Head of caudate nucleus (tissue), 42 donors: ENCODE measurements at regions of chr9 and their contacts with region 1.

Region 1: DNA sequence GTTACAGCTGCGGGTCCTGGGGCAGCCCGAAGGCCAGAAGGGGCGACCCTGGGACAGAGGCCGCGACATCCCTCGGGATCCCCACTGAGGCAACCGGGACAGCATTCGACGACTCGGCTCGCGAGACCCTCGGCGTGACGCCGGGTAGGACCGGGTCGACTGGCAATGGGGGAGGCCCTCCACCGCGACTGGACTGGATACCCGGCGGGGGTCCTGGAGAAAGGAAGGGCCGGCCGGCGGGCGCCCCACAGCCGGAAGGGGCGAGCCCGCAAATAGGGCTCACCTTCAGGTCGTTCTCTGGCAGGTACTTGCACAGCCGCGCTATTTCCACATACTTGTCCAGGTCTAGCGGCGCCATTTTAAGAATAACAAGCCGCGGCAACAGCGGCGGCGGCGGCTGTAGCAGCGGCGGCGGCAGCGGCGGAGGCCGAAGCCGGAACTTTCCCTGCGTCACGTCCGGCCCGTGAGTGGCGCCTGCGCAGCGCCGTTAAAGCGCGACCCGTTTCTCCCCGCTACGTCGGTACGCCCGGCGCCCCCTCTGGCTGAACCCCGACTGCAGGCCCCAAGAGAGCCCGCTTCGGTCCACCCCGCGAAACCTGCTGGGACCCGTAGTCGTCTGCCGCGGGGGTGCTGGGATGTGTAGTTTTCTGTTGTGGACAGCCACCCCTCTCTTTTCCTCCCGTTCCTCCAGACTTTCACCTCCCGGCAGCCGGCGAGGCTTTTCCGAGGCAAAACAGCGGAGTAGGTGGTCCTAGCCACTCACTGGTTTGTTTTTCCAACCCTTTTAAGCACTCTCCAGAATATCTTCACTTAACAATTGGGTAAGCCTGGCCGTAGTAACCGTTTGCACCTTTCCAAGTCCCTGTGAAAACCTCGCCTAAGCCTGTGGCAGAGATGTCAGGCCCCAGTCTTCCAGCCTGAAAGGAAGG is at the start of gene PPP6C:
- DNase-seq: peak; percentile 95 to 99 (median 99)

Region 2: GRCh38 chr9:124861342-124862229 is 328.0 kb before region 1 on chr9 and contains the starts of genes ARPC5L and RPL35:
- intact Hi-C with region 1: no loop called
- DNase-seq: peak; percentile 90 to 99 (median 97)

Region 3: DNA sequence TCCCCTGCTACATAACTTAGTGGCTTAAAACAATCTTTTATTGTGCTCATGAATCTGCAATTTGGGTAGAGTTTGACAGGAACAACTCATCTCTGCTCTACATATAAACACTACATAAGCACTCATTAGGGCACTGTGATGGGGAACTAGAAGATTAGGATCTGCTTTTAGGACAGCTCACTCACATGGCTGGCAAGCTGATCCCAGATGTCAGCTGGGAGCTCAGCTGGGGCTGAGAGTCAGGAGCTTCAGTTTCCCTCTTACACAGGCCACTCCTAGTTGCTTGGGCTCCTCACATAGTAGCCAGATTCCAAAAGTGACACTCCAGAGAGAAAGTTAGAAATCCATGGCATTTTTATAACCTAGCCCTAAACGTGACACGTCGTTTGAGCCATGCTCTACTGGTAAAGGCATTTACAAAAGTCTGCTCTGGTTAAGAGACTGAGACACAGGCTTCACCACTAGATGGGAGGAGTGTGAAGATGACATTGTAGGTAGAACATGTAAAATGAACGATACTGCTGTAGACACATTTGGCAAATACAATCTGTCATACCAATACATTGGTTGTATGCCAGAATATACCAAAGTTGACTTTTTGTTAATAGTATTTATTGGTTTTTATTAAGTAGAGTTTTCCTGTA is 69.9 kb before region 1 on chr9:
- intact Hi-C with region 1: no loop called
- DNase-seq: peak in 1 of 42 donors; percentile 3

Region 4: DNA sequence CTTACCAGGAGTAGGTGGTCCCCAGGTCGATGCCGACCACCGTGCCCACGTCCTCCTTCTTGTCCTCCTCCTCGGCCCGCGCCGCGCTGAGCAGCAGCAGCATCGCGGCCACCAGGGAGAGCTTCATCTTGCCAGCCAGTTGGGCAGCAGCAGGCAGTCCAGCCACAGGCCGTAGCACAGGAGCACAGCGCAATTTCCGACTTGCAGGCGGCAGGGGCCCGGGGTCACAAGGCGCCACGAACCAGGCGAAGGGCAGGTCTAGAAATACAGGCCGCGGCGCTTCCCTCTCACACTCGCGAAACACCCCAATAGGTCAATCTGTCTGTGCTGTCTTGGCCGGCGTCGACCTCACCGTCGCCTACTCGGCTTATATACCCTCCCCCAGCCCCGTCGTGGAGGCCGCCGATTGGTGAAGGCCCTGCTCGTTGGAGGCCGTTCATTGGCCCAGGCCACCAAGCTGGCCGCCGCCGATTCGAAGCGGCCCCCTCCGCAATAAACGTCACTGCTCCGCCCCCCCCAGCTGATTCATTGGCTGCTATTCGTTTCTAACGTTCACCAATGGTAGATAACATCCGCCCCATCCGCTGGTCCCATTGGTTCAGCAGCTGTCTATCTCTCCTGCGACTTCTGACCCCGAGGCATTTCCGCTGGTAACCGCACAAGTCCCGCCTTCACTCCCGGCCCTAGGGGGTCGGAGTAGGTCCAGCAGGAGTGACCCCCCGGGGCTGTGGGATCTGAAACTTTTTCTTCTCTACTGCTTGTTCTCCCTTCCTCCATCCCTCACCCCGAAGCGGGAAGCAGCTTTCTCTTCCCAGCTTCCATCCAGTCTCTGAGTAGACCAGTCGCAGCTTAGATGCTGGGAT is 51.6 kb after region 1 on chr9 and contains the start of gene HSPA5:
- intact Hi-C with region 1: loop called (anchors 2 kb)
- DNase-seq: peak; percentile 98 to 100 (median 99)